Activated T-helper 2 cell treated with anti-CD3 and anti-CD28 coated beads, Interferon-gamma antibody, Interleukin-2, Interleukin-4, amounts not matched to agents 10 μg/mL and 5 μg/mL and 100 μg/mL, durations not matched to agents 14 hours and 24 hours and 36 hours (primary cell): ENCODE measurements at regions of chr9 and their contacts with region 1.

Region 1: GRCh38 chr9:127611899-127612790 is at the start of gene STXBP1:
- DNase-seq: peak; percentile 87
- H3K4me3 Mint-ChIP-seq: peak within 1 kb of the TSS; percentile 93
- H3K27ac Mint-ChIP-seq: peak within 1 kb of the TSS; percentile 84
- H3K4me1 Mint-ChIP-seq: peaks cover 27% of the 10 kb centered on the region
- H3K27me3 Mint-ChIP-seq: peaks cover 35% of the 10 kb centered on the region
- total RNA-seq, gene STXBP1: 44.5 and 48.9 TPM in 2 replicates

Region 2: GRCh38 chr9:127154390-127155191 is 457.6 kb before region 1 on chr9:
- intact Hi-C with region 1: no loop called
- DNase-seq: no peak
- H3K4me3 Mint-ChIP-seq: no peak overlapping the region
- H3K27ac Mint-ChIP-seq: no peak overlapping the region
- H3K4me1 Mint-ChIP-seq: peaks cover 14% of the 10 kb centered on the region
- H3K27me3 Mint-ChIP-seq: peaks cover 42% of the 10 kb centered on the region

Region 3: DNA sequence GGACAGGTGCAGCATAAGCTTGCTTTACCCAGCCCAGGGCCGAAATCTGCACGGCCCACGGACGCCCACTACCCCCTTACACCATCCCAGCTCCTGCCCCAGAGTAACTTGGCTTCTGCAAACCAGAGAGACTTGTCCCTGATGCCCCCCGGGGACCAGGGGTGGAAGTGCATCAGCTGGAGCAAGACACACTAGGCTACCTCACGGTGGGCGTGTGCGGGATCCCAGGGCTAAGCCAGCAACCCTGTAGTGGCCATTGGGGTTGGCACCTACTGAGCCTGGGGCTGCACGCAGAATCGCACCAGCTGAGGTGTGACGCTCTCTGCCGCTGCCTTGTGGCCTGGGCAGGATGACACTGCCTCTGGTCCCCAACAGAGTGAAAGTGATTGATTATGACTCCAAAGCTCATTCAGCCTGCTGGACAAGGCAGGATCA is 194.1 kb before region 1 on chr9:
- intact Hi-C with region 1: no loop called
- DNase-seq: no peak
- H3K4me3 Mint-ChIP-seq: no peak overlapping the region
- H3K27ac Mint-ChIP-seq: no peak overlapping the region
- H3K4me1 Mint-ChIP-seq: peaks cover 2% of the 10 kb centered on the region
- H3K27me3 Mint-ChIP-seq: peaks cover 10% of the 10 kb centered on the region

Region 4: DNA sequence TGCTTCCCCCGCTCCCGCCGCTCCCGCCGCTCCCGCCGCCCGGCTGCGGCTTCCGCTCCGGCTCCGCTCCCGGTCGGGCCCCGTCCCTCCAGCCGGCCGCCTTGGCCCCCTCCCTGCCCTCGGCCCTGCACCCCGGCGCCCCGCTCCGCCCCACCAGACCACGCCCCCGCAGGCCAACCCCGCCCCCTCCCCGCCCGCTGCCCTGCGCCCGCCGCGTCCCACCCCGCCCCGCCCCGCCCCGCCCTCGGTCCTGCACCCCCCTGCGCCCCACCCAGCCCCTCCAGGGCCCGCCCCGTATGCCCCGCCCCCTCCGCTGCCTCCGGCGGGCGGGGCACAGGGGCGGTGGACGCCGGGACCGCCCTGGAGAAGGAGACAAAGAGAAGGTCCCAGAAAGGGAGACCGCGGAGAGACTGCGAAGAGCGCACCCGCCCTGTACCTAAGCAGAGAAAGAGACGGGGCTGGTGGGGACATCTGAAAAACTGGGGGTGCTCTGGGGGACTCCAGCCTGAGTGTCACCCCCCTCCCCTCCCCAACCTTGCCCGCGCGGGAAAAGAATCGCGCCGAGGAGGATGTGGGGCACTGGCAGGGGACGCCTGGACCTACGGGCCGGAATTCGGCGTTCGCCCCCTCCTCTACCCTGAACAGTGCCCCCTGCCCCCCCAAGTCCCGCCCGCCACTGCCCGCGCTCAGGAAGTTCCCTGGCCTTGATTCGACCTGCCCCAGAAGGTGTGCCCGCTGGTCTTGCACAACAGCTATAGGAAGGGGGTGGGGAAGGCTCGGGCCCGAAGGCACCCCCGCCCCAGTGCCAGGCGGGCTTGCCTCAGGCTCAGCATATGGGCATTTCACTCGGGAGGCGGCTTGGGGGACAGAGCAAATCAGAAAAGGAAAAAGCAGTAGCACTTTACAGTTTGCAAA is 42.9 kb before region 1 on chr9:
- intact Hi-C with region 1: loop called (anchors 1 kb)
- DNase-seq: peak; percentile 76
- H3K4me3 Mint-ChIP-seq: peak overlapping the region; percentile 79
- H3K27ac Mint-ChIP-seq: peak overlapping the region; percentile 84
- H3K4me1 Mint-ChIP-seq: peaks cover 39% of the 10 kb centered on the region
- H3K27me3 Mint-ChIP-seq: no peaks in the 10 kb centered on the region

Region 5: GRCh38 chr9:127715394-127716337 is 103.5 kb after region 1 on chr9 and contains the starts of genes PTRH1 and TTC16:
- intact Hi-C with region 1: loop called (anchors 5 kb)
- DNase-seq: peak; percentile 95
- H3K4me3 Mint-ChIP-seq: peak within 1 kb of the TSS; percentile 92
- H3K27ac Mint-ChIP-seq: peak within 1 kb of the TSS; percentile 90
- H3K4me1 Mint-ChIP-seq: peaks cover 23% of the 10 kb centered on the region
- H3K27me3 Mint-ChIP-seq: no peaks in the 10 kb centered on the region
- total RNA-seq, gene PTRH1: 20.1 and 21.5 TPM in 2 replicates
- total RNA-seq, gene TTC16: 0.18 TPM in 1 of 2 replicates, not detected in the other